ENCODE measurements at regions of chr5 and their contacts with region 1.

Region 1: DNA sequence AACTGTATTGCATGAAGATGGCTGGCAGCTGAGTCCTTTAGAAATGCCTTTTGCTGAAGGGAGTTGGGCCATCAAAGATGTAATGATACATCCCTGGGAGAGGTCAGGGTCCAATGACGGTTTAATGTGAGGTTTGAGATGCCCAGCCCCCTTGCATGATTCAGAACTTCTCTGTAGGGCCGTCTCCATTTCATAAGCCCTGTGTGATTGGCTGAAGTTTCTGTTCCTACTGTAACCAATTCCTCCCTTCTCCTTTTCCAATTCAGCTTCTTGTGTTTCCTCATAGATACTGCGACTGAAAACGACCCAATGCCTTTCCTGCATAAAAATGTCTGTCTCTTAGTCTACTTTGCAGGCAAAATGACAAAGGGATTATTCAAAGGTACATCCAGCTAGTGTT is 47.9 kb upstream of the ST8SIA4 start:
- DNase-seq: no peak
- ATAC-seq: no peak
- H3K4me3 ChIP-seq: no peak overlapping the region
- H3K27ac ChIP-seq: no peak overlapping the region
- H3K4me1 ChIP-seq: no peaks in the 10 kb centered on the region
- H3K27me3 ChIP-seq: no peaks in the 10 kb centered on the region
- CTCF ChIP-seq: no peak
- EP300 ChIP-seq: no peak
- POLR2A ChIP-seq: no peak
- RAD21 ChIP-seq: no peak

Region 2: DNA sequence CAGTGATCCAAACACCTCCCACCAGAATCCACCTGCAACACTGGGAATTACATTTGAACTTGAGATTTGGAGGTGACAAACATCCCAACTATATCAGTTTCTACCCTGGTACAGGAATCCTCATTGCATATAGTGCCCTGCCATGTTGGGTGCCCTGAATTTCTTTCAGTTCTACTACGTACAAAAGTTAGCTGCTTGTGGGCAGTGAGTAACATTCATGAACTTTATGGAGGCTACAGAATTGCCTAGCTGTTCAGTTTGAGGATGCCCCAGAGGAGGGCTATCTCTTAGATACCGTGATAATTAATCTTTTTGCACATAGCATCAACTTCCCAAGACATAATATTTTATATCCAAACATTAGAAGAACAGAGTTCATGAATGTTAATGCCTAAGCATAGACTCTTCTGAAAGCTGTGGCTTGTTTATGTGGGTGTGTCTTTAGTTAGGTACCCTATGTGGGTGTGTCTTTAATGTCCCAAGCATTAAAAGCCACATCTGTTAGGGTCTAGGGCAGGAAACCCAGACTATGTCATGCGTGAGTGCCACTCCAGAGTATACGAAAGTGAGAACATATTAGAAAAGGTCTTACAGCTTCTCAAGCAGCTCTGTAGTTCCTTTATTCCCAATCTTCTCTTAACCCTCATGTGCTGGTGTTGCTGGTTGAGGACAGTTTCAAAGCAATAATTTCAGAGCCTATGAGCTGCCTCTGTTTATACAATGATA is 1975.1 kb before region 1 on chr5:
- CTCF ChIA-PET with region 1: no interaction called
- POLR2A ChIA-PET with region 1: interaction called, 10 read pairs
- RAD21 ChIA-PET with region 1: no interaction called
- SMC1A ChIA-PET with region 1: no interaction called
- in situ Hi-C with region 1: no loop called
- intact Hi-C with region 1: no loop called
- DNase-seq: peak; percentile 30
- ATAC-seq: peak; percentile 89
- H3K4me3 ChIP-seq: no peak overlapping the region
- H3K27ac ChIP-seq: no peak overlapping the region
- H3K4me1 ChIP-seq: peaks cover 9% of the 10 kb centered on the region
- H3K27me3 ChIP-seq: no peaks in the 10 kb centered on the region
- CTCF ChIP-seq: no peak
- EP300 ChIP-seq: no peak
- POLR2A ChIP-seq: no peak
- RAD21 ChIP-seq: no peak

Region 3: DNA sequence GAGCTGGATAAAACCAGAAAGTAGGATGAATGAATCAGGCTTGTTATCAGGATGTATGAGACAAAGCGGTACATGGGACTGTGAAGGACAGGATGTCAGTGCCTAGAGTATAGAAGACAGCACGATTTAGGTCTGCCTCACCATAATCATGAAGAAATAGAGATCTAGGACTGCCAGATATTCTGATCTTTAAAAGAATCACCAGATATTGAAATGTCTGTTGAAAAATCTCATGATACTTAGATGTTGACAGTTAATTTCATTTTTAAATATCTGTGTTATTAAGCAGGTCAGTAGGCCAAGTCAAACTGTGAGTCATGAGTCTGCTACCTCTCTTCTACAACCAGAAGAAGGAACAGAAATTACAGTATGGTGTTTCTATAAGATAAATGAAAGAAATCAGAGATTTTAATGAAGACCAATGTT is 112.9 kb before region 1 on chr5:
- CTCF ChIA-PET with region 1: no interaction called
- POLR2A ChIA-PET with region 1: no interaction called
- RAD21 ChIA-PET with region 1: no interaction called
- SMC1A ChIA-PET with region 1: no interaction called
- in situ Hi-C with region 1: no loop called
- intact Hi-C with region 1: no loop called
- DNase-seq: no peak
- ATAC-seq: peak; percentile 46
- H3K4me3 ChIP-seq: no peak overlapping the region
- H3K27ac ChIP-seq: peak overlapping the region; percentile 29
- H3K4me1 ChIP-seq: peaks cover 28% of the 10 kb centered on the region
- H3K27me3 ChIP-seq: no peaks in the 10 kb centered on the region
- CTCF ChIP-seq: no peak
- EP300 ChIP-seq: peak in 1 of 2 experiments; percentile 28; a peak in 1 of 4 replicates
- POLR2A ChIP-seq: no peak
- RAD21 ChIP-seq: no peak

Region 4: GRCh38 chr5:101206534-101206933 is 255.5 kb after region 1 on chr5:
- CTCF ChIA-PET with region 1: no interaction called
- POLR2A ChIA-PET with region 1: no interaction called
- RAD21 ChIA-PET with region 1: no interaction called
- SMC1A ChIA-PET with region 1: no interaction called
- in situ Hi-C with region 1: no loop called
- intact Hi-C with region 1: no loop called
- DNase-seq: no peak
- ATAC-seq: no peak
- H3K4me3 ChIP-seq: no peak overlapping the region
- H3K27ac ChIP-seq: no peak overlapping the region
- H3K4me1 ChIP-seq: no peaks in the 10 kb centered on the region
- H3K27me3 ChIP-seq: no peaks in the 10 kb centered on the region
- CTCF ChIP-seq: no peak
- EP300 ChIP-seq: no peak
- POLR2A ChIP-seq: no peak
- RAD21 ChIP-seq: no peak